Prostate gland (tissue), 2 donors: ENCODE measurements at regions of chr10 and their contacts with region 1.

Region 1: GRCh38 chr10:60816628-60817397 is 38.5 kb downstream of the CDK1 start:
- DNase-seq: peak; percentile 72
- H3K4me3 ChIP-seq: no peak overlapping the region
- H3K27ac ChIP-seq: peak overlapping the region in 1 of 2 donors; percentile 28
- H3K4me1 ChIP-seq: no peaks in the 10 kb centered on the region
- H3K27me3 ChIP-seq: no peaks in the 10 kb centered on the region
- CTCF ChIP-seq: peak; percentile 54 to 84 (median 74)
- POLR2A ChIP-seq: no peak

Region 2: GRCh38 chr10:60964257-60965235 is 147.7 kb after region 1 on chr10:
- intact Hi-C with region 1: loop called (anchors 1 kb)
- DNase-seq: peak; percentile 61
- H3K4me3 ChIP-seq: no peak overlapping the region
- H3K27ac ChIP-seq: peak overlapping the region in 1 of 2 donors; percentile 16
- H3K4me1 ChIP-seq: peaks cover 4% of the 10 kb centered on the region
- H3K27me3 ChIP-seq: no peaks in the 10 kb centered on the region
- CTCF ChIP-seq: peak; percentile 46 to 76 (median 72)
- POLR2A ChIP-seq: no peak

Region 3: GRCh38 chr10:61284222-61284890 is 467.5 kb after region 1 on chr10:
- intact Hi-C with region 1: loop called (anchors 2 kb)
- DNase-seq: peak; percentile 45
- H3K4me3 ChIP-seq: no peak overlapping the region
- H3K27ac ChIP-seq: peak overlapping the region; percentile 15 to 44
- H3K4me1 ChIP-seq: no peaks in the 10 kb centered on the region
- H3K27me3 ChIP-seq: no peaks in the 10 kb centered on the region
- CTCF ChIP-seq: peak; percentile 60 to 88 (median 85)
- POLR2A ChIP-seq: no peak

Region 4: DNA sequence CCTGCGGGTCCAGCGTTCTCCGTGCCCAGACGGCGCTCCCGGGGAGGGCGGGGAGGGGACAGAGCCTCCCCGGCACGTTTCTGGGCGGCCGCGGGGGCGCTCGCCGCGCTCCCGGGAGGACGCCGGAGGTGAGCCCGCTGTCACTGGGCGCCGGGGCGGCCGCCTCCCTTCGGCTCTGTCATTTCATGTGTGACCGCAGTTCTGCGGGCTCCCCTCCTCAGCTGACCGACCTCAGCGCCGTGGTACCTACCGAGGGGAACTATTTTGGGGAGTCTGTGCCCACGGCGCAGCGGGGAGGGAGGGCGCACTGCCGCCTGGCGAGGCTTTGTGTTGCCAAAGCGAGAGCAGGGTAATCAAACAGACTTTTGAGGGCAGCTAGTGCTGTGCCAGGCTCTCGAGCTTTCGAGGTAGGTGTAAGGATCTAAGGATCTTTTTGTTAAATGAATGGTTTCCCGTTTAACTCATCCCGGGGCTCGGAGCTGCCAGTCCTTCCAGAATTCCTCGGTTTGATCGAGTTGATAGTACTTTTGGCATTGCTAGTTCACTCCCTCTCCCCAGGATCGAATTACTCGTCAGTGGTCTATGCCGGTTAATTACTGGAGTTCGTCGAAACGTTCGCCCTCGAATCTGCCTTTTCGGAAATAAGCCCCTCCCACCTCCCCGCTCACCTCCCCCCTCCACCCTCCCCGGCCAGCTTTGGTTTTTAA is 1086.6 kb after region 1 on chr10:
- intact Hi-C with region 1: loop called (anchors 10 kb)
- DNase-seq: peak; percentile 61
- H3K4me3 ChIP-seq: peak overlapping the region; percentile 58 to 85
- H3K27ac ChIP-seq: peak overlapping the region; percentile 98
- H3K4me1 ChIP-seq: peaks cover 2% of the 10 kb centered on the region
- H3K27me3 ChIP-seq: no peaks in the 10 kb centered on the region
- CTCF ChIP-seq: peak in 2 of 4 experiments; percentile 21 to 37
- POLR2A ChIP-seq: no peak